MCF 10A (cell line): ENCODE measurements at regions of chr1 and their contacts with region 1.

Region 1: GRCh38 chr1:42766741-42767509 is at the starts of genes C1orf50 and P3H1:
- DNase-seq: peak; percentile 99
- H3K4me3 Mint-ChIP-seq: no peak within 1 kb of the TSS
- H3K27ac Mint-ChIP-seq: no peak within 1 kb of the TSS
- H3K4me1 Mint-ChIP-seq: peaks cover 6% of the 10 kb centered on the region
- H3K27me3 Mint-ChIP-seq: no peaks in the 10 kb centered on the region
- CTCF ChIP-seq: no peak
- total RNA-seq, gene C1orf50: 11.7 and 13.8 TPM in 2 replicates
- total RNA-seq, gene P3H1: 36.1 and 57.2 TPM in 2 replicates

Region 2: DNA sequence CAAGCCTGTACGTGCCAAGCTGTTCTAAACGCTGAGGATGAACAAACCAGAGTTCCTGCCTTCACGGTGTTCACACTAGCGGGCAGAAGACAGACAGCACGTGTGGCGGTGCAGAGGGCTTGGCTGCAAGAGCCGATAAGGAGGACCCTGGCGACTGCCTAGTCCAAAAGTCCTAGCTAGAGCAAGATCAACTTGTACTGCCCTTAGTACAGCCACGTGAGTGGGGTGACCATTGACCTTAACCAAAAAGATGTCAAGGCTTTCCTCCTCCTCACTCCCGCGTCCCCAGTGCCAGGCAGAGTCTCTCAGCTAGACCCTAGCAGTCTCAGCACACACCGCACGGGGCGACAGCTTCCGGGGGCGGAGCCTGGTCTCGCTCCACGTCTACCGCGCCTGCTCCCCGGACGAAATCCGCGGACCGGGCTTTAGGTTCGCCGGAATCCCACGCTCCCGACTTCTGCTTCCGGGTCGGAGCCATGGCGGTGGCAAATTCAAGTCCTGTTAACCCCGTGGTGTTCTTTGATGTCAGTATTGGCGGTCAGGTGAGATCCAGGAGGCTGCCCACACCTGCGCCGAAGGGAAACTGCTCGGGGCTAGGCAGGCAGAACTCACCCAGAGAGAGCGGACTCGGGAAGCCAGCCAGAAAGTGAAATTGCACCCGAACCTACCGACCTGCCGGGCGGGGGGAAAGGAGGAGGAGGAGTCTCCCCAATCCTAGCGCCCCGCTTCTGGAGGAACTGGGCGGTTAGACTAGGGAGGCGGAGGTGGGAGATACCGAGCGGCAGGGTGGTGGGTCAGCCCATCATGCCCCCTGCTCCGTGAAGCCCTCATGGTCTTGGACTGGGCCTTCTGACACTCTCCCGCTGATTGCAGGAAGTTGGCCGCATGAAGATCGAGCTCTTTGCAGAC is 108.7 kb before region 1 on chr1 and contains the start of gene PPIH:
- CTCF ChIA-PET with region 1: no interaction called
- POLR2A ChIA-PET with region 1: interaction called, 23 read pairs
- intact Hi-C with region 1: no loop called
- DNase-seq: peak; percentile 92
- H3K4me3 Mint-ChIP-seq: peak within 1 kb of the TSS; percentile 97
- H3K27ac Mint-ChIP-seq: peak within 1 kb of the TSS; percentile 95
- H3K4me1 Mint-ChIP-seq: peaks cover 13% of the 10 kb centered on the region
- H3K27me3 Mint-ChIP-seq: peaks cover under 1% of the 10 kb centered on the region
- CTCF ChIP-seq: no peak
- total RNA-seq, gene PPIH: 52.4 and 55.9 TPM in 2 replicates

Region 3: GRCh38 chr1:42747125-42747524 is 19.8 kb before region 1 on chr1:
- CTCF ChIA-PET with region 1: interaction called, 10 read pairs
- POLR2A ChIA-PET with region 1: interaction called, 30 read pairs
- intact Hi-C with region 1: no loop called
- DNase-seq: peak; percentile 35
- H3K4me3 Mint-ChIP-seq: no peak overlapping the region
- H3K27ac Mint-ChIP-seq: no peak overlapping the region
- H3K4me1 Mint-ChIP-seq: peaks cover 18% of the 10 kb centered on the region
- H3K27me3 Mint-ChIP-seq: no peaks in the 10 kb centered on the region
- CTCF ChIP-seq: peak; percentile 58

Region 4: DNA sequence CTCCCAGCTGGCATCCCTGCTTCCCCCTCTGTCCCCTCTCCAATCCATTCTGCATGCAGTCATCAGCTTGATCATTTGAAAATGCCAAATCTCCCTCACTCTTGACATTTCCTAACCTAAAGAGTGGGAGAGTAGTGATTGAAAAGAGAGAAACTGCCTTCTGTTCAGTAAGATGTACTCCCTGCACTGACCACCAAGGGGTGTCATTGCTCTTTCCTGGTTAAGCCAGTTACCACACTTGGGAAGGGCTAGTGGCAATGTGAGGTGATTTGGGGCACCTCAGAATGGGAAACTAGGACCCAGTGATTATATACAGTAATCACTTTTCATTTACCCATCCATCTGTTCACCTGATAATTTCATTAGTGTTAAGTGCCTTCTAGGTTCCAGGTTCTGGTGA is 10.9 kb after region 1 on chr1:
- CTCF ChIA-PET with region 1: interaction called, 5 read pairs
- POLR2A ChIA-PET with region 1: interaction called, 32 read pairs
- intact Hi-C with region 1: no loop called
- DNase-seq: peak; percentile 58
- H3K4me3 Mint-ChIP-seq: no peak overlapping the region
- H3K27ac Mint-ChIP-seq: no peak overlapping the region
- H3K4me1 Mint-ChIP-seq: no peaks in the 10 kb centered on the region
- H3K27me3 Mint-ChIP-seq: no peaks in the 10 kb centered on the region
- CTCF ChIP-seq: peak; percentile 61

Region 5: DNA sequence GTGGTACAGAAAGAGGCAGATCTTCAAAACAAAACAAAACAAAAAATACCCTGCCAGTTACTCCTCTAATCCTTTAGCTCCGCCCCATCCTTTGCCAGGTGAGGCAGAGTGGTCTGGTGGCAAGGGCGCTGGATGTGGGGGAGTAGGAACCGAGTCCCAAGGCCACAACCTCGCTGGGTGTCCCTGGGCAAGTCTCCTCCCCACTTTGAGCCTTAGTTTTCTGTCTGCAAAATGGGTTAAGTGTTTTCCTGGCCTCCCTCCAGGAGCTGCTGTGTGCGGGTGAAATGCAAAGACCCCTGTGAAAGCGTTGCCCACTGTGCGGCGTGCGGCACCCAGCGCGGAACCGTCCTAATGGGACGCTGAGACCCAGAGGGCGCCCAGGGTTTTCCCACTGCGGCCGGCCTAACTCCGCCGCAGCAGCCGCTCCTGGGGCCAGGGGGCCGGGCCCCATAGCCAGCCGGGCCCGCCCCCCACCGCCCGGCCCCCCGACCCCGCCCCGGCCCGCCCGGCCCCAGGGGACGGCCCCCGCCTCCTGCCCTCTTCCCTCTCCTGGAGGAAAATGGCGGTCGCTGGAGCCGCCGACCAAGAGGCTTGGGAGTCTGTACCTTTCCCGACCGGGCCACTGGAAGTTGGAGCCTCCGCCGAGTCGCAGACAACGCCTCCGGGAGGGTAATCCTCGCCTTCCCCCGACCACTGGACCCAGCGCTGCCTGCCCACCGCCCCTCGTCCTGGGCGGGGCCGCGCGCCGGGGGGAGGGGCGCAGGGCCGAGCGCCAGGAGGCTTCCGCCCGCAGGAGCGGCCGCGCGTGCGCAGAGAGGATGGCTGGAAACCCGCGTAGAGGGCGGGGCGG is 49.9 kb after region 1 on chr1 and contains the starts of genes ERMAP and SVBP:
- CTCF ChIA-PET with region 1: interaction called, 3 read pairs
- POLR2A ChIA-PET with region 1: interaction called, 56 read pairs
- intact Hi-C with region 1: no loop called
- DNase-seq: peak; percentile 84
- H3K4me3 Mint-ChIP-seq: peak within 1 kb of the TSS; percentile 71
- H3K27ac Mint-ChIP-seq: peak within 1 kb of the TSS; percentile 74
- H3K4me1 Mint-ChIP-seq: peaks cover 21% of the 10 kb centered on the region
- H3K27me3 Mint-ChIP-seq: no peaks in the 10 kb centered on the region
- CTCF ChIP-seq: no peak
- total RNA-seq, gene ERMAP: 13.2 and 17.2 TPM in 2 replicates
- total RNA-seq, gene SVBP: 15.7 and 16.7 TPM in 2 replicates

Region 6: DNA sequence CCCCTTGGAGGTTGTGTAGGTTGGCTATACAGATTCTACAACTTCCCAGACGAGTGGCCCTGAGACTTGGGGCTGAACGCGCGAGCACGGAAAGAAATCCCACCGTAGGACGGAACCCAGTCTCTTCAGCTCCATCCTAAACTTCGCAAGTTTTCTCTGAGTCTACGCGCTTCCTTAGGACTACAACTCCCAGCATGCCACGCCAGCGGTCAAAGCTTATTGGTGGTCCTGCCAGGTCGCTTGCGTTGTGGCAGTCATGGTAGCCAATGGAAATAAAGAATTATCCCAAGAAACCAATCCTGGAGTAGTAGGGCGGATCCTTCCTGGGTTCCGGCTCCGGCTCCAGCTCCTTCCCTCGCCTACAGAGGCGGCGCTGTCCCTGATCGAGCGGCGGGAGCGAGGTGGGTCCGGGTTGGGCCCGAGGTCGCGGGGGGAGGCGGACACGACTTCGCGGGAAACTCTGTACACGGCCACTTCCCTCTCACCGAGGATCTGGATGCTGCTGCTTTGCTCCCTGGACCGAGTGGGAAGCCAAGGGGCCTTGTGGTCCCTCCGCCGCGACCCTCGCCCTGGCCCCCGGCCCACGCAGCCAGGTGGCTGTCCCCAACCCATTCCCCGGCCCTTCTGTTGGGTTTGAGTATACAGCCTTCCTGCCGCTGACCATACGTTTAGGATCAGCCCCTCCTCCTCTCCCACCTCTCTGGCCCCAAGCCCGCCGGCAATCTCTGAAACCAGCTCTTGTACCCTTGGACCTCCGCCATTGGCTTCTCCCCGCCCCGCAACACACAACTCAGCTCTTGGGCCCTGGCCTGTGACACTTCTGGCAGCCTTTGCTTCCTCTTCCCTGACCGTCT is 79.6 kb after region 1 on chr1 and contains the start of gene ZNF691:
- CTCF ChIA-PET with region 1: interaction called, 3 read pairs
- POLR2A ChIA-PET with region 1: interaction called, 46 read pairs
- intact Hi-C with region 1: no loop called
- DNase-seq: peak; percentile 97
- H3K4me3 Mint-ChIP-seq: peak within 1 kb of the TSS; percentile 98
- H3K27ac Mint-ChIP-seq: peak within 1 kb of the TSS; percentile 98
- H3K4me1 Mint-ChIP-seq: peaks cover 28% of the 10 kb centered on the region
- H3K27me3 Mint-ChIP-seq: no peaks in the 10 kb centered on the region
- CTCF ChIP-seq: peak; percentile 27
- total RNA-seq, gene ZNF691: 8.4 and 9.5 TPM in 2 replicates